HEK293 (cell line): ENCODE measurements at regions of chr11 and their contacts with region 1.

Region 1: GRCh38 chr11:72793425-72794367 is at the start of gene STARD10:
- H3K4me3 ChIP-seq: peak within 1 kb of the TSS; percentile 96
- H3K27ac ChIP-seq: peak within 1 kb of the TSS; percentile 39; the same call in 1 of the 2 replicates
- H3K4me1 ChIP-seq: no peaks in the 10 kb centered on the region
- CTCF ChIP-seq: peak; percentile 99

Region 2: GRCh38 chr11:72722050-72722748 is 71.5 kb before region 1 on chr11:
- CTCF ChIA-PET with region 1: interaction called, 57 read pairs
- POLR2A ChIA-PET with region 1: interaction called, 12 read pairs
- H3K4me3 ChIP-seq: peak overlapping the region; percentile 62
- H3K27ac ChIP-seq: peak overlapping the region; percentile 78
- H3K4me1 ChIP-seq: peaks cover 5% of the 10 kb centered on the region; the same call in 1 of the 2 replicates
- CTCF ChIP-seq: no peak

Region 3: GRCh38 chr11:72781313-72782050 is 12.2 kb before region 1 on chr11:
- CTCF ChIA-PET with region 1: interaction called, 9 read pairs
- POLR2A ChIA-PET with region 1: interaction called, 11 read pairs
- H3K4me3 ChIP-seq: peak overlapping the region; percentile 28
- H3K27ac ChIP-seq: no peak overlapping the region
- H3K4me1 ChIP-seq: no peaks in the 10 kb centered on the region
- CTCF ChIP-seq: no peak

Region 4: GRCh38 chr11:72814286-72815109 is 20.8 kb after region 1 on chr11 and contains the start of gene ATG16L2:
- CTCF ChIA-PET with region 1: interaction called, 13 read pairs
- POLR2A ChIA-PET with region 1: interaction called, 3 read pairs
- H3K4me3 ChIP-seq: peak within 1 kb of the TSS; percentile 70
- H3K27ac ChIP-seq: peak within 1 kb of the TSS; percentile 73
- H3K4me1 ChIP-seq: no peaks in the 10 kb centered on the region
- CTCF ChIP-seq: peak; percentile 22; the same call in 1 of the 2 replicates

Region 5: GRCh38 chr11:72897506-72897905 is 103.8 kb after region 1 on chr11:
- CTCF ChIA-PET with region 1: no interaction called
- POLR2A ChIA-PET with region 1: no interaction called
- H3K4me3 ChIP-seq: no peak overlapping the region
- H3K27ac ChIP-seq: no peak overlapping the region
- H3K4me1 ChIP-seq: no peaks in the 10 kb centered on the region
- CTCF ChIP-seq: no peak